Caco-2 (cell line): ENCODE measurements at regions of chrX and their contacts with region 1.

Region 1: DNA sequence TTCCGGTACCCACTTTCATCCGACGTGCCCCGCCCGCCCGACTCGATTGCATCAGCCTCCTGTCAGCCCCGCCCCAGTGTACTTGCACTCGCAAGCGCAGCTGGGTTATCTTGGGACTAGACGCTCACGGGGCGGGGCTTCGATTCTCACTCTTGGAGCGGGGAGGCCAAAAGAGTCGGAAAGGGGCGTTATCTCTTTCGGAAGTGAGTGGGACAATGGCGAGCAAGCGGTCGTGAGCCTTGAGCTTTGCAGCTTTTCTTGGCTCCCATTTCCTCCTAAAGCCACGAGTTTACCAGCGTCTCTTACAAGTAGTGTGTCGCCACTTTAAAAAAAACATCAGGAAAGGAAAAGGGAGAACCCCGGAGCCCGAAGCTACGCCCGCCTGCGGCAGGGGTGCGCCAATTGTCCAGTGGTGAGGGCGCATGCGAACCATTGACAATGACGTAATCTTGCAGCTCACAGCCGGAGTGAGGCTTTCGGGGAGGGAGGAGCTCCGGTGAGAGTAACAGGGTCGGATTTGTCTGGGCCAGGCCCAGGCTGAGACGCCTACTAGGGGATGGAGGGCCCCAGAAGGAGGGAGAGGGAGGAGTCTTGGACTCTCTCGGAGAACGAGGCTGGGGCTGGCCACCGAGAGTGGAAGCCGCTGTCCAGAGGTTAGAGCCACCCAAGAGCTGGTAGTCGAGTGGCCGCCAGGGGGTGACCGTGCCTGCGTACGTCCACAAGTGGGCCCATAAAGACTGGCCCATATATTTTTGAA is 109.5 kb downstream of the GNL3L start:
- DNase-seq: peak; percentile 91 to 95
- H3K4me3 ChIP-seq: peak overlapping the region; percentile 34
- H3K4me3 Mint-ChIP-seq: peak overlapping the region; percentile 79
- H3K27ac Mint-ChIP-seq: peak overlapping the region; percentile 90
- H3K4me1 ChIP-seq: no peaks in the 10 kb centered on the region
- H3K4me1 Mint-ChIP-seq: peaks cover 5% of the 10 kb centered on the region
- H3K27me3 ChIP-seq: no peaks in the 10 kb centered on the region
- H3K27me3 Mint-ChIP-seq: no peaks in the 10 kb centered on the region
- CTCF ChIP-seq: peak; percentile 24 to 73

Region 2: DNA sequence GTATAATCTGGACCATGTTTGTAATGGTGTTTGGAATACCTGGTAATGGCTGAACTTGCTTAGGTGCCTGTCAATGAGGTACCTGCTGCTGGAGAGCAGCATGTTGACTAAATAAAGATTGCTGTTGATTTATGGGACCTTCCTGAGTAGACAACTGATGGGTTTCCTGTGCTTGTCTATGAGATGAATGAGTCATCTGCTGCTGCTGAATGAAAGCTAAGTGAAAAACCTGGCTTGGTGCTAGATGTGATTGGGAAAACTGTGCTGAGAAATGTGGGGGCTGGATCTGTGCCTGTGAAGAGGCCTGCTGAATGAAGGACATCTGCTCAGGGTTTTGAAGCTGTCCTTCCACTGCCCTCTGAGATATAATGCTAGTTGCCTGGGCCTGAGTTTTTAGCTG is 351.2 kb before region 1 on chrX:
- CTCF ChIA-PET with region 1: no interaction called
- POLR2A ChIA-PET with region 1: no interaction called
- intact Hi-C with region 1: no loop called
- DNase-seq: no peak
- H3K4me3 ChIP-seq: no peak overlapping the region
- H3K4me3 Mint-ChIP-seq: no peak overlapping the region
- H3K27ac Mint-ChIP-seq: no peak overlapping the region
- H3K4me1 ChIP-seq: no peaks in the 10 kb centered on the region
- H3K4me1 Mint-ChIP-seq: no peaks in the 10 kb centered on the region
- H3K27me3 ChIP-seq: no peaks in the 10 kb centered on the region
- H3K27me3 Mint-ChIP-seq: peaks cover 7% of the 10 kb centered on the region
- CTCF ChIP-seq: no peak

Region 3: DNA sequence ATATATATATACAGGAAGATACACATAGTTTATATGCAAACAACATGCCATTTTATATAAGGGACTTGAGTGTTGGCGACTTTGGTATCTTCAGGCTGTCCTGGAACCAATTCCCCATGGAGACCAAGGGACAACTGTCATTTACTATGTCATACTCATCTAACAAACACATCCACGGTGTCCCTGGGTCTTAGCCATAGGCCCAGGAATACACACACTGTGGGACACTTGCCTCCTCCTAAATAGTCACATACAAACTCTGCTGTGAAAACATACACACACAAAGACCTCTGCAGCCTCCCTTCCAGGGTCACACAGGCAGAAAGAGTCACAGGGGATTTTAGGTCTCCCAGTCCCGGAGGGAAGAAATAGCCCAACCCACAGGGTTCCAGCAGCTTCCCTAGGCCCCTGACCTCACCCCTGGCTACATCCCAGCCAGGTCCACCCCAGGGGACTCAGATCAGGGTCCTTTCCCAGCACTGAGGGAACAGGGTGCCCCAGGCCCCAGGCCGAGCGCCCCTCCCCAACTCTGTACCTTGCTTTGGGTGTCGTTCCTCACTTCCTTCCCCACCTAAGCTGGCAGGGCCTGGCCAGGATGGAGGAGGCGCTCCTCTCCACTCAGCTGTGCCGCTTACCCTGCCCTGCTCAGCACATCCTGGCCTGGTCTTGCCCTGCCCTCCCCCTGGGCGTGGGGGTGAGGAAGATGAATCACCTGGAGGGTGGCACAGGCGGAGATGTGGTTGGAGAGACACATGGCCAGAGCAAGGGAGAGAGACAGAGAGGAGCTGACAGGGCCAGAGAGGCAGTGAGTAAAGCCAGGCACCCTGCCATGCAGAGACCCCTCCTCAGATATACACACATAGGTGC is 165.3 kb before region 1 on chrX:
- CTCF ChIA-PET with region 1: no interaction called
- POLR2A ChIA-PET with region 1: no interaction called
- intact Hi-C with region 1: no loop called
- DNase-seq: no peak
- H3K4me3 ChIP-seq: no peak overlapping the region
- H3K4me3 Mint-ChIP-seq: no peak overlapping the region
- H3K27ac Mint-ChIP-seq: no peak overlapping the region
- H3K4me1 ChIP-seq: peaks cover 2% of the 10 kb centered on the region; the same call in 1 of the 2 replicates
- H3K4me1 Mint-ChIP-seq: no peaks in the 10 kb centered on the region
- H3K27me3 ChIP-seq: no peaks in the 10 kb centered on the region
- H3K27me3 Mint-ChIP-seq: no peaks in the 10 kb centered on the region
- CTCF ChIP-seq: no peak

Region 4: GRCh38 chrX:54602563-54602962 is 37.0 kb before region 1 on chrX:
- CTCF ChIA-PET with region 1: no interaction called
- POLR2A ChIA-PET with region 1: no interaction called
- intact Hi-C with region 1: no loop called
- DNase-seq: no peak
- H3K4me3 ChIP-seq: no peak overlapping the region
- H3K4me3 Mint-ChIP-seq: no peak overlapping the region
- H3K27ac Mint-ChIP-seq: no peak overlapping the region
- H3K4me1 ChIP-seq: no peaks in the 10 kb centered on the region
- H3K4me1 Mint-ChIP-seq: no peaks in the 10 kb centered on the region
- H3K27me3 ChIP-seq: no peaks in the 10 kb centered on the region
- H3K27me3 Mint-ChIP-seq: no peaks in the 10 kb centered on the region
- CTCF ChIP-seq: no peak

Region 5: GRCh38 chrX:54786962-54787361 is 147.4 kb after region 1 on chrX:
- CTCF ChIA-PET with region 1: interaction called, 10 read pairs
- POLR2A ChIA-PET with region 1: no interaction called
- intact Hi-C with region 1: loop called (anchors 1 kb)
- DNase-seq: peak in 1 of 2 experiments; percentile 24
- H3K4me3 ChIP-seq: no peak overlapping the region
- H3K4me3 Mint-ChIP-seq: no peak overlapping the region
- H3K27ac Mint-ChIP-seq: no peak overlapping the region
- H3K4me1 ChIP-seq: no peaks in the 10 kb centered on the region
- H3K4me1 Mint-ChIP-seq: no peaks in the 10 kb centered on the region
- H3K27me3 ChIP-seq: no peaks in the 10 kb centered on the region
- H3K27me3 Mint-ChIP-seq: peaks cover 4% of the 10 kb centered on the region
- CTCF ChIP-seq: peak; percentile 8 to 12

Region 6: DNA sequence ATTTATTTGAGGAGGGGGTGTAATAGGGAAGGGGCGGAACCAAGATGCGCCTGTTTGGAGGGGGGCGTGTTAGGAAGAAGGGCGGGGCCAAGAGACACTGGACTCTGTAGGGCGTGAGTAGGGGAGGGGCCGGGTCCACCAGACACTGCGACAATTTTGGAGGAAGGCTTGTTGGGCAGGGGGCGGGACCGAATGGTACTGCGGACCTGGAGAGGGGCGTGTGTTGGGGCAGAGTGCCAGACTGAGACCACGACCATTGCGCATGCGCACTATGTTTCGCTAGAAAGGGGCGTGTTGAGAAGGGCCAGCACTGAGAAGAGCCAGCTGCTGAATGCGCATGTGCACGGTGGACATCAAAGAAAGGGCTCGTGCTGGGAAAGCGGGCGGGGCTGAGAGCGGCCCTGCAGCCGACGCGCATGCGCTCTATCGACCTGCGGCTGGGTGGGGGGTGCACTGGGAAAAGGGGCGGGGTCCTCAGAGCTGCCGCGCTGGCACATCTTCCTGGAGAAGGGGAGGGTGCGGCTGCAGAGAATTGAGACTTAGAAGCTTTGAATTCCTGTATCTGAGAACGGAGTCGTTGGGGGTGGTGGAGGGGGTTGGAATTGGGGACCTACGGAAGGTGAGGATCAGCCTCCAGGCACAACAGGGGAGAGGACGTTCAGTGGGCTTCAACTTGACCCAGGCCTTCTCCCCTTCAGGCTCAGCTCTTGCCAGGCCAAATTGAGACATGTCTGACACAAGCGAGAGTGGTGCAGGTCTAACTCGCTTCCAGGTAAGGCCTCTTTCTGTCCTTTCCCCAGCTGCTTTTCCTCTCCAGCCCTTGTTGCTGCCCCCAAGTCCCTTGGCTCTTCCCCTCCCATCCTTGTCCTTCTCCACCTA is 169.3 kb after region 1 on chrX:
- CTCF ChIA-PET with region 1: interaction called, 5 read pairs
- POLR2A ChIA-PET with region 1: interaction called, 6 read pairs
- intact Hi-C with region 1: loop called (anchors 2 kb)
- DNase-seq: peak; percentile 93 to 96
- H3K4me3 ChIP-seq: peak overlapping the region; percentile 64
- H3K4me3 Mint-ChIP-seq: peak overlapping the region; percentile 99
- H3K27ac Mint-ChIP-seq: peak overlapping the region; percentile 99
- H3K4me1 ChIP-seq: peaks cover 13% of the 10 kb centered on the region
- H3K4me1 Mint-ChIP-seq: peaks cover 11% of the 10 kb centered on the region
- H3K27me3 ChIP-seq: no peaks in the 10 kb centered on the region
- H3K27me3 Mint-ChIP-seq: peaks cover 3% of the 10 kb centered on the region
- CTCF ChIP-seq: no peak

Region 7: DNA sequence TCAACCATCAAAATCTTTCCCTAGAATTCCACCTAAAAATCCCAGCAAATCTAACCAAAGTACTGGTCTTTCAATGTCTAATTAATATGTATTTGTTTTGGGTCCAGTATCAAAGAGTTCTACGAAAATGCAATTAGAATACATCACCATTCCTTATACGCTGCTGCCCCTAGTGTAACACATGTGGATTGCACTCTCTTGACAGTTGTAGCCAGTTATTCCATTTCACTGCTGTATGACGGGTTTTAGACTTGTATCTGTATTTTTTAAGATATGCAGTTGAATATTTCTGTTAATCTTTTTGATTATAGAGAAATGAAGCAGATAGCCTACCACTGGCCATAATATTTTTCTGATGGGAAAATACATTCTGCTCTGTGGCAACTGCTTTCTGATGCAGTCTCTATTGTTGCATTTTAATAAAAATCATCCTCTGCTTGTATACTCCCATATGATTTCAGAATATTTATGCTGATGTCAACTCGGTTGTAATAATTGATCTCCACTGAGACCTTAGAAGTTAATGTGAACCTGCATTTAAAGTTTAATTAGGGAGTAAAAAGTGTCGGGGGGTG is 418.2 kb after region 1 on chrX:
- CTCF ChIA-PET with region 1: no interaction called
- POLR2A ChIA-PET with region 1: no interaction called
- intact Hi-C with region 1: loop called (anchors 5 kb)
- DNase-seq: peak in 1 of 2 experiments; percentile 33
- H3K4me3 ChIP-seq: no peak overlapping the region
- H3K4me3 Mint-ChIP-seq: no peak overlapping the region
- H3K27ac Mint-ChIP-seq: no peak overlapping the region
- H3K4me1 ChIP-seq: no peaks in the 10 kb centered on the region
- H3K4me1 Mint-ChIP-seq: no peaks in the 10 kb centered on the region
- H3K27me3 ChIP-seq: no peaks in the 10 kb centered on the region
- H3K27me3 Mint-ChIP-seq: no peaks in the 10 kb centered on the region
- CTCF ChIP-seq: peak; percentile 52 to 69

Region 8: DNA sequence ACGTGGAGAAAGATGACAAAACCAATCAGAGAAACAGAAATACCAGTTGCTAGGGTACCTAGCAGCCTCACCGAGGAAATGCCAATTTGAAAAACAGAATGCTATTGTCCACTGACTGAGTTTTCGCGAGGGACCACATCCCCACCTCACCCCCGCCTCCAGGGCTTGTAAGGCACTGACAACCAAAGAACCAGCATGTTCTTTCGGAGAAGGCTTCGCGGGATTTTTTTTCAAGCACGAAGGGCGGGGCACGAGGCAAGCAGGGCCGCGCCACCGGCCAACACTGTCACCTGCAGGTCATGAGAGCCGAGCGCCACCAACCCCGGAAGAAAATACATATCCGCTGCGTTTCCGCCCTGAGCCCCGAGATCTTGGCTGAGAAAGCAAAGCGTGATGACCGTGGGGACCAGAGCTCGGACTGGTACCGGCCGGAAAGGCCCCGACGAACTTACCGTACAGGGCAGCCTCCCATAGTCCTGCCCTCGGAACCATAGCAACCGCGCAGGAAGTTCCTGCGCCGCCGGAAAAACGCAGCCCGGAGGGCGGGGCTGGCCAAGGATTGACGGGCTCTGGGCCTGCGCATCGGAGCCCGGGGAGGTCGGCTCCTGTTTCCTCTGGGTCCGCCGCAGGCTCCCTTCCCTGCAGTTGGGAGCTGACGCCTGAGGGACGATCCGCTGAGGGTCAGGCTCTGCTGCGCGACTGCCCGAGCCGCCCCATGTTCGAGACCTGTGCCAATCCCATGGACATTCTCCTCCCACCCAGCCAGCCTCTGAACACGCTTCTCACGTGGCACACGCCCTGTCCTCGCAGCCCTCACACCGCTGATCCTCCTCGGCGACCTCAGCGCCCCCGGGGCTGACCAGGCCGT is 521.4 kb after region 1 on chrX:
- CTCF ChIA-PET with region 1: no interaction called
- POLR2A ChIA-PET with region 1: no interaction called
- intact Hi-C with region 1: loop called (anchors 5 kb)
- DNase-seq: peak; percentile 86 to 87
- H3K4me3 ChIP-seq: peak overlapping the region; percentile 70
- H3K4me3 Mint-ChIP-seq: peak overlapping the region; percentile 98
- H3K27ac Mint-ChIP-seq: peak overlapping the region; percentile 98
- H3K4me1 ChIP-seq: peaks cover 3% of the 10 kb centered on the region; the same call in 1 of the 2 replicates
- H3K4me1 Mint-ChIP-seq: no peaks in the 10 kb centered on the region
- H3K27me3 ChIP-seq: no peaks in the 10 kb centered on the region
- H3K27me3 Mint-ChIP-seq: no peaks in the 10 kb centered on the region
- CTCF ChIP-seq: peak; percentile 44 to 79